Calu3 (cell line): ENCODE measurements at regions of chr12 and their contacts with region 1.

Region 1: DNA sequence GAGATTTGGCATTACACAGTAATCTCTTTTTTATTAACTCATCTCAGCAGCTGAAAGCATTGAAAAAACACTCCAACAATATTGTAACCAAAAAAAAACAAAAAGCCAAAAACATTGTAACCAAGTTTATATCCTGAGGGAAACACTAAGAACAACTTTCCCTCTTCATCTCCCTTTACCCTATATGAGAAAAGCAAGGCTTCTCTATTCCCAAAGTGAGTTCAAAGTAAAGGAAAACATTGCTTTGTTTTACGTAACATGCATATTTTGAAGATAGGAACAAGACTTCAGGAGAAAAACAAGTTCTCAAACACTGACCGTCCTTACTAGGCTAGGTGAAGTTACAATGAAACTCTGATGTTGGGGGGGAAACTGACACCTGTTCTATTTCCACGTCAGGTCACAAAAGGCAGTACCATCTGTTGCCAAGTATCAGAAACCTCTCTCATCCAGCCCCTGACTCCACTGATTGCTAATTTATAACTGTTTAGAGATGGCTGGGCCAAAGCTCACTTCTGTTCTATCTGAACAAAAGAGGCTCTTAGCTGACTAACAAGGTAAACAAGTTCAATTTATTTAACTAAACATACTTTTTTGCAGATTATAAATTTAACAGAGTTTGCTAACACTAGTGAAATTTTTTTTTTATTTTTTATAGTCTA is 67.9 kb upstream of the PLXNC1 start:
- DNase-seq: no peak
- H3K4me3 Mint-ChIP-seq: no peak overlapping the region
- H3K27ac Mint-ChIP-seq: no peak overlapping the region
- H3K4me1 Mint-ChIP-seq: no peaks in the 10 kb centered on the region
- H3K27me3 Mint-ChIP-seq: peaks cover 48% of the 10 kb centered on the region
- CTCF ChIP-seq: no peak

Region 2: GRCh38 chr12:93766796-93767523 is 313.5 kb before region 1 on chr12:
- CTCF ChIA-PET with region 1: interaction called, 10 read pairs
- intact Hi-C with region 1: no loop called
- DNase-seq: peak; percentile 40
- H3K4me3 Mint-ChIP-seq: no peak overlapping the region
- H3K27ac Mint-ChIP-seq: no peak overlapping the region
- H3K4me1 Mint-ChIP-seq: peaks cover 9% of the 10 kb centered on the region
- H3K27me3 Mint-ChIP-seq: no peaks in the 10 kb centered on the region
- CTCF ChIP-seq: peak; percentile 24